CD8-positive, alpha-beta memory T cell (primary cell): ENCODE measurements at regions of chr20 and their contacts with region 1.

Region 1: GRCh38 chr20:49165611-49166010 is 22.5 kb downstream of the STAU1 start:
- DNase-seq: no peak
- H3K4me3 ChIP-seq: no peak overlapping the region
- H3K4me3 Mint-ChIP-seq: no peak overlapping the region
- H3K27ac ChIP-seq: no peak overlapping the region
- H3K27ac Mint-ChIP-seq: peak overlapping the region in 5 of 8 donors; percentile 4 to 79 (median 29)
- H3K4me1 ChIP-seq: peaks cover 30% of the 10 kb centered on the region
- H3K4me1 Mint-ChIP-seq: peaks cover 52 to 68% (median 63%) of the 10 kb centered on the region in 3 donors
- H3K27me3 ChIP-seq: no peaks in the 10 kb centered on the region
- H3K27me3 Mint-ChIP-seq: no peaks in the 10 kb centered on the region

Region 2: DNA sequence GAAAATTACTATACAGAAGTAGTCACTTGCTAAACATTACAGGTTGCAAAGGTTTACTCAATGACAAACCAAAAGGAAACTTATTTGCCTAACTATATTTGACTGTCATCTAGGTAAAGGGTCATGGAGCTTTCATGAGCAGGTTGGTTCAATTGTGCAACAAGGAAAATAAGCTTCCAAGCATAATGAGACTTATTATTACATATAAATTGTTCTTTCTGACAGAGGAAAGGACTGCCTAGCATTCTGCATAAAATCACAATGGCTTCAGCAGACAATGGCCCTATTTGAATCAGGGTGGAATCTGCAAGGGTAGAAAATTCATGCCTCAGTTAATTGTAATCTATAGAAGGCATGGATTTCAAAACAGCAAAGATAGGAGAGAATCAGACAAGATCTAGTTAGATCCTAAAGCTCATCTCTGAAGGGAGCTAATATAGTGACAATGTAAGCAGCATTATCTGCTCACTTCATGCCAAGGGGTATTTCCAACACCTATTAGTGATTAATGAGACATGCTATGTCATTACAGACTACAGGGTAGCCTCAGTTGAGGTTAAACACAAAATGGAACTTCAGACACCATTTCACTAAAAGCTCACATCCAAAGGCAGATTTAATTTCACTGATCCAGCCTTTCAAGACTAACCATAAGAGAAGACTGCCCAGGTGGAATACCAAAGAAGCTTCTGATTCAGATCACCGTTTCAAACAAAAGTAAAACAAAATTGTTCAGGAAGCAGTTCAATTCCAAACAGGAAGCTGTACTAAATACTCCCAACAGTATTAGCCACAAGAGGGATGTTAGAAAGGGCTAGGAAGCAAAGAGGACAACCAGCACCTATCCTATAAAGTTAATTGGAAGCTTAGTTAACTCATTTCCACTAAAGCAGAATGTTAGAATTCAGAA is 14.0 kb after region 1 on chr20:
- CTCF ChIA-PET with region 1: interaction called, 11 read pairs
- POLR2A ChIA-PET with region 1: no interaction called
- DNase-seq: no peak
- H3K4me3 ChIP-seq: no peak overlapping the region
- H3K4me3 Mint-ChIP-seq: peak overlapping the region in 1 of 7 donors; percentile 13
- H3K27ac ChIP-seq: no peak overlapping the region
- H3K27ac Mint-ChIP-seq: peak overlapping the region in 7 of 8 donors; percentile 5 to 77 (median 30)
- H3K4me1 ChIP-seq: peaks cover 31% of the 10 kb centered on the region
- H3K4me1 Mint-ChIP-seq: peaks cover 52 to 71% (median 54%) of the 10 kb centered on the region in 3 donors
- H3K27me3 ChIP-seq: no peaks in the 10 kb centered on the region
- H3K27me3 Mint-ChIP-seq: no peaks in the 10 kb centered on the region

Region 3: GRCh38 chr20:49447946-49448809 is 282.6 kb after region 1 on chr20:
- CTCF ChIA-PET with region 1: no interaction called
- POLR2A ChIA-PET with region 1: no interaction called
- DNase-seq: no peak
- H3K4me3 ChIP-seq: no peak overlapping the region
- H3K4me3 Mint-ChIP-seq: no peak overlapping the region
- H3K27ac ChIP-seq: no peak overlapping the region
- H3K27ac Mint-ChIP-seq: peak overlapping the region in 1 of 8 donors; percentile 17
- H3K4me1 ChIP-seq: no peaks in the 10 kb centered on the region
- H3K4me1 Mint-ChIP-seq: no peaks in the 10 kb centered on the region
- H3K27me3 ChIP-seq: peaks cover 6% of the 10 kb centered on the region
- H3K27me3 Mint-ChIP-seq: peaks cover 24 to 74% of the 10 kb centered on the region in 2 donors